ENCODE measurements at regions of chr6 and their contacts with region 1.

Region 1: GRCh38 chr6:138509371-138509770 is 10.1 kb upstream of the NHSL1 start:
- DNase-seq: peak; percentile 66
- H3K4me3 Mint-ChIP-seq: no peak overlapping the region
- H3K27ac Mint-ChIP-seq: no peak overlapping the region
- H3K4me1 Mint-ChIP-seq: no peaks in the 10 kb centered on the region
- H3K27me3 Mint-ChIP-seq: peaks cover 5% of the 10 kb centered on the region

Region 2: DNA sequence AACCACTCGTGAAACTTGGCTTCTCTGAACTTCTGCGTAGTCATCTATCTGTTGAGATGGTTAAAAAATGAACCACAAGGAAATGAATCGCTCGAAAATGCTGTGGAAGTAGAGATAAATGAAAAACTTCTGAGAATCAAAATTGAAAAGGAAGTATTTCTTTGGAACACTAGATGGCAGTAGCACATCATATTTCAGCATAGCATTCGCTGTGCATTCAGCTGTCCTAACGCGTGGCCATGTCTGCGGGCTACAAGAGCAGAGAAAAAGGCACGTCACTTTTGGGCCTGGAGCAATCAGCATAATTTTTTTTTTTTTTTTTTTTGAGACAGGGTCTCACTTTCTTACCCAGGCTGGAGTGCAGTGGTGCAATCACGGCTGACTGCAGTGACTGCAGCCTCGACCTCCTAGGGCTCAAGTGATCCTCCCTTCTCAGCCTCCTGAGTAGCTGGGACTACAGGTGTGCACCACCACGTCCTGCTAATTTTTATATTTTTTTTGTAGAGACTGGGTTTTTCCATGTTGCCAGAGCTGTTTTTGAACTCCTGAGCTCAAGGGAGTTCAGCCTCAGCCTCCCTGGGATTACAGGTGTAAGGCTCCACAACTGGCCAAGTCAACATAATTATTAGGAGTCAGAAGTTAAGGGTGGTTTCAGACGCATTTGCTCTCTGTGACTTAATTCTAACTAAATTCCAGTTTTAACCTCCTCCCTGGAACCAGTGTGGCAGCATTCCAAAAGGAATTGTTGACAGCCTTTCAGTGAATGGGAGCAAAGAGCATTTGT is 393.3 kb before region 1 on chr6:
- CTCF ChIA-PET with region 1: interaction called, 10 read pairs
- POLR2A ChIA-PET with region 1: no interaction called
- DNase-seq: peak; percentile 56
- H3K4me3 Mint-ChIP-seq: no peak overlapping the region
- H3K27ac Mint-ChIP-seq: no peak overlapping the region
- H3K4me1 Mint-ChIP-seq: peaks cover 8% of the 10 kb centered on the region
- H3K27me3 Mint-ChIP-seq: peaks cover 43% of the 10 kb centered on the region

Region 3: GRCh38 chr6:138426500-138427123 is 82.8 kb before region 1 on chr6:
- CTCF ChIA-PET with region 1: interaction called, 11 read pairs
- POLR2A ChIA-PET with region 1: no interaction called
- DNase-seq: no peak
- H3K4me3 Mint-ChIP-seq: no peak overlapping the region
- H3K27ac Mint-ChIP-seq: no peak overlapping the region
- H3K4me1 Mint-ChIP-seq: peaks cover 8% of the 10 kb centered on the region
- H3K27me3 Mint-ChIP-seq: no peaks in the 10 kb centered on the region

Measured in activated CD4-positive, alpha-beta T cell treated with anti-CD3 and anti-CD28 coated beads, Interleukin-2, amount 10 ng/mL, durations not matched to agents 7 days and 5 days (primary cell).